Motor neuron (in vitro differentiated cells): ENCODE measurements at regions of chr5 and their contacts with region 1.

Region 1: DNA sequence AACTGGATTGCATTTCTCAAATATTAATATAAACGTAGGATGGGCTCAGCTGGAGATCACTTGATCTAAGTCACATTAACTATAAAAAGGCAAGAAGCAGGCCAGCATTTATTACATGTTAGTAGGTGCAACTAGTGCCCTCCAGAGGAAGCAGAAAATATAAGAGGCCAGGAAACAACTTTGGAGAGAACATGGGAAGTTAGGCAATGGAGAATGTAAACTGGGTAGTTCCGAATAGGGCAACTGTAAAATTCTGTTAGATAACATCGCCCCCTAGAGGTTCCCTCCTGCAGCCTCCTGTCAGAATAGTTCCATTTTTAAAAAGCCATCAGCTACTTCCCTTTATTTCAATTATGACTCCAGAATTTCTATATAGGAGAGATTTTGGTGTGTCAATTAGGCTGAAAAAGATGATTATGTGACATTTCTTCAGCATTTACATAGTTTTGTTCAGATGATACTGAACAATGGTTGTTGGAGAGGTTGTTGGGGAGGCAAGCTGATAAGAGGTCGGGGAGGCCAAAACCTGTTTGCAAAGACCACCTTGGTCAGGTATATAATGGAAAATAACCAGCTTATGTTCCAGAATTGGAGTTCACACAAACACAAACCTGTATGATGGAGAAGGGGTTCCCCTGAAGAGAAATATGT is 22.4 kb downstream of the CCL28 start:
- ATAC-seq: peak; percentile 90 to 100 (median 97)
- H3K4me3 ChIP-seq: no peak overlapping the region
- H3K27ac ChIP-seq: no peak overlapping the region
- H3K4me1 ChIP-seq: no peaks in the 10 kb centered on the region

Region 2: GRCh38 chr5:42908509-42909488 is 481.0 kb before region 1 on chr5:
- in situ Hi-C with region 1: loop called in 1 of 9 experiments (anchors 25 kb)
- ATAC-seq: peak; percentile 93 to 98 (median 96)
- H3K4me3 ChIP-seq: peak overlapping the region; percentile 37 to 52 (median 40)
- H3K27ac ChIP-seq: no peak overlapping the region
- H3K4me1 ChIP-seq: no peaks in the 10 kb centered on the region

Region 3: GRCh38 chr5:43105369-43106289 is 284.2 kb before region 1 on chr5:
- in situ Hi-C with region 1: loop called in 1 of 9 experiments (anchors 25 kb)
- ATAC-seq: peak; percentile 94 to 100 (median 100)
- H3K4me3 ChIP-seq: peak overlapping the region in 1 of 5 donors; percentile 18
- H3K27ac ChIP-seq: no peak overlapping the region
- H3K4me1 ChIP-seq: no peaks in the 10 kb centered on the region

Region 4: DNA sequence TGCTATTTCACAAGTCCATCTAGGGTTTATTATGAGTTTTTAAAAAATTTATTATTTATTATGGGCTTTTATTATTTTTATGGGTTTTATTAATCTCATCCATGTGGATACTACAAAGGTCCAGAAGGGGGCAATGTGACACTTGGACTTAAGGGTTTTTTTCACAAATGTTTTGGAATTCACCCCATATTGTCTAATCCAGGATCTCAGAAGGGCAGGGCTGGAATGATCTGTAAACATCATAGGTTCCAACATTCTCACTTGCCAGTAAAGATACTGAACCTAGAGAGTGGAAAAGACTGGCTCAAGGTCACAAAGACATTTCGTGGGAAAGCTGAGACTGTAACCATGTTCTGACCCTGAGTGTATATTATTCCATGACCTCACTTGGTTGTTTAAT is 162.1 kb before region 1 on chr5:
- in situ Hi-C with region 1: loop called in 1 of 9 experiments (anchors 10 kb)
- ATAC-seq: peak in 3 of 8 experiments; percentile 20 to 51 (median 22)
- H3K4me3 ChIP-seq: no peak overlapping the region
- H3K27ac ChIP-seq: no peak overlapping the region
- H3K4me1 ChIP-seq: no peaks in the 10 kb centered on the region